Breast epithelium (tissue), 4 donors: ENCODE measurements at regions of chr16 and their contacts with region 1.

Region 1: GRCh38 chr16:49531931-49532840 is 158.6 kb downstream of the C16orf78 start:
- DNase-seq: no peak
- H3K4me3 ChIP-seq: no peak overlapping the region
- H3K27ac ChIP-seq: no peak overlapping the region
- H3K4me1 ChIP-seq: no peaks in the 10 kb centered on the region
- H3K27me3 ChIP-seq: no peaks in the 10 kb centered on the region
- CTCF ChIP-seq: no peak
- POLR2A ChIP-seq: no peak

Region 2: GRCh38 chr16:48681520-48681919 is 850.7 kb before region 1 on chr16:
- intact Hi-C with region 1: loop called (anchors 5 kb)
- DNase-seq: no peak
- H3K4me3 ChIP-seq: no peak overlapping the region
- H3K27ac ChIP-seq: no peak overlapping the region
- H3K4me1 ChIP-seq: no peaks in the 10 kb centered on the region
- H3K27me3 ChIP-seq: no peaks in the 10 kb centered on the region
- CTCF ChIP-seq: no peak
- POLR2A ChIP-seq: no peak

Region 3: GRCh38 chr16:49489686-49490320 is 42.4 kb before region 1 on chr16:
- intact Hi-C with region 1: loop called (anchors 1 kb)
- DNase-seq: no peak
- H3K4me3 ChIP-seq: no peak overlapping the region
- H3K27ac ChIP-seq: no peak overlapping the region
- H3K4me1 ChIP-seq: peaks cover 0 to 2% of the 10 kb centered on the region in 2 donors
- H3K27me3 ChIP-seq: no peaks in the 10 kb centered on the region
- CTCF ChIP-seq: no peak
- POLR2A ChIP-seq: no peak

Region 4: DNA sequence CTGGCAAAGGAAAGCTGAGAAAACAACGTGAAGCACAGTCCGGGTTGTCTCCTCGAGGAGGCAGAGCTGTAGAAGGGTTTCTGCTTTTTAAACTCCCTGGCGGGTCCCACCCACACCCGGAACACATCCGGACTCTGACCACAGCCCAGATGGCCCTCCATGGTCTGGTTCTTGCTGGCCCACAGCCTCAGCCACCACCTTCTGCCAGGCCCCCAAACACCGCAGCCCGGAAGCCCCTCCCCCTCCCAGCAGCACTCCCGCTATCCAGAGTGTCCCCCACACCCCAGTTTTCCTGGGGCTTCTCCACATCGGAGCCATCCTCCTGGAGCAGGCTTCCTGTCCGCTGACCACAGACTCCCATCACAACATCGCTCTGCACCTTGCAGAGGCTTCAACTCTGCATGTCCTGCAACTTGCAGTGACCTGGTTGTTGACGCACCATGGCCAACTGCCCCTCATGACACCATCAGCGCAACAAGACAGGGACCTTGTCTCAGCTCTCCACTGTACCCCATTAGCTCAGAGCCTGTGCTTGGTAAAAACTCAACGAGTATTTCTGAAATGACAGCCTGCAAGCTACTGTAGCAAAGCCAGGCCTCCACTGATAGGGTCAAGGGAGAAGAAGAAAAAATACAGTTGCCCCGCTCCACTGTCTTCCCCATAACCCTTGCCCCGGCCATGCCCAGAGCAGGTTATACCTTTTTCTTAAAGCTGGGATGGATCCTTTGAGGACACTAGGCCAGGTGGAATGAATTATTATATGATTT is 28.7 kb before region 1 on chr16:
- intact Hi-C with region 1: no loop called
- DNase-seq: peak in 1 of 2 donors; percentile 30
- H3K4me3 ChIP-seq: no peak overlapping the region
- H3K27ac ChIP-seq: no peak overlapping the region
- H3K4me1 ChIP-seq: no peaks in the 10 kb centered on the region
- H3K27me3 ChIP-seq: no peaks in the 10 kb centered on the region
- CTCF ChIP-seq: no peak
- POLR2A ChIP-seq: no peak